Ascending aorta (tissue), 2 donors: ENCODE measurements at regions of chr12 and their contacts with region 1.

Region 1: GRCh38 chr12:68686595-68687521 is at the start of gene NUP107:
- DNase-seq: peak; percentile 93 to 99
- H3K4me3 ChIP-seq: peak within 1 kb of the TSS; percentile 69 to 85
- H3K27ac ChIP-seq: peak within 1 kb of the TSS; percentile 66 to 69
- H3K4me1 ChIP-seq: peaks cover 5 to 7% of the 10 kb centered on the region in 2 donors
- H3K27me3 ChIP-seq: no peaks in the 10 kb centered on the region
- CTCF ChIP-seq: no peak
- total RNA-seq, gene NUP107: 4.7 TPM

Region 2: GRCh38 chr12:68331869-68332727 is 354.8 kb before region 1 on chr12 and contains the start of gene MDM1:
- intact Hi-C with region 1: loop called (anchors 1 kb)
- DNase-seq: peak; percentile 94 to 99
- H3K4me3 ChIP-seq: peak within 1 kb of the TSS; percentile 77 to 88
- H3K27ac ChIP-seq: peak within 1 kb of the TSS; percentile 58 to 66
- H3K4me1 ChIP-seq: peaks cover 0 to 8% of the 10 kb centered on the region in 2 donors
- H3K27me3 ChIP-seq: no peaks in the 10 kb centered on the region
- CTCF ChIP-seq: no peak
- total RNA-seq, gene MDM1: 9.5 TPM

Region 3: GRCh38 chr12:68358532-68359485 is 328.0 kb before region 1 on chr12:
- intact Hi-C with region 1: loop called (anchors 1 kb)
- DNase-seq: peak in 1 of 2 donors; percentile 80
- H3K4me3 ChIP-seq: no peak overlapping the region
- H3K27ac ChIP-seq: no peak overlapping the region
- H3K4me1 ChIP-seq: no peaks in the 10 kb centered on the region
- H3K27me3 ChIP-seq: no peaks in the 10 kb centered on the region
- CTCF ChIP-seq: peak; percentile 63 to 66 (median 64)

Region 4: DNA sequence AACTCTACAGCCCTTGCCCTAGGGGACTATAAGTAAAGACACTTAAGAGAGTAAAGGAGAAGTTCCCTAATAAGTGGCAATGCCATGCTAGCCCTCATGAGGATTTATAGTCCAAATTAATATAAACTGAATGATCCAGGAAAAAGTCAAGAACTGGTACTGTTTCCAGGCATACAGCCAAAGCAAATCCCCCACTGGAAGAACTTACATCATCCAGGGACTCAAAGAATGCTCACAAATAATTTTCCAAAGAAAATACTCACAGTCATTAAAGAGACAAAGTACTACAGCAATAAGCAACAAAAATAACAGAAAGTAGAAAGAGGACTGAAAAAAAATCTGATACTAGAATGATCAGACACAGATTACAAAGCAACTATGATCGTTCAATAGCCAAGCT is 155.9 kb before region 1 on chr12:
- intact Hi-C with region 1: loop called (anchors 2 kb)
- DNase-seq: peak in 1 of 2 donors; percentile 74
- H3K4me3 ChIP-seq: peak overlapping the region in 1 of 2 donors; percentile 2
- H3K27ac ChIP-seq: peak overlapping the region; percentile 22 to 68
- H3K4me1 ChIP-seq: peaks cover 6 to 28% of the 10 kb centered on the region in 2 donors
- H3K27me3 ChIP-seq: no peaks in the 10 kb centered on the region
- CTCF ChIP-seq: no peak

Region 5: GRCh38 chr12:68745904-68746571 is 59.2 kb after region 1 on chr12 and contains the start of gene SLC35E3:
- intact Hi-C with region 1: loop called (anchors 1 kb)
- DNase-seq: peak; percentile 68 to 94
- H3K4me3 ChIP-seq: peak within 1 kb of the TSS; percentile 66 to 85
- H3K27ac ChIP-seq: peak within 1 kb of the TSS; percentile 72 to 75
- H3K4me1 ChIP-seq: peaks cover 0 to 7% of the 10 kb centered on the region in 2 donors
- H3K27me3 ChIP-seq: no peaks in the 10 kb centered on the region
- CTCF ChIP-seq: no peak
- total RNA-seq, gene SLC35E3: 2.0 TPM

Region 6: GRCh38 chr12:68772714-68773113 is 85.9 kb after region 1 on chr12:
- intact Hi-C with region 1: no loop called
- DNase-seq: no peak
- H3K4me3 ChIP-seq: no peak overlapping the region
- H3K27ac ChIP-seq: no peak overlapping the region
- H3K4me1 ChIP-seq: no peaks in the 10 kb centered on the region
- H3K27me3 ChIP-seq: no peaks in the 10 kb centered on the region
- CTCF ChIP-seq: no peak

Region 7: GRCh38 chr12:68807576-68808387 is 120.9 kb after region 1 on chr12 and contains the start of gene MDM2:
- intact Hi-C with region 1: loop called (anchors 5 kb)
- DNase-seq: peak; percentile 85 to 97
- H3K4me3 ChIP-seq: peak within 1 kb of the TSS; percentile 81 to 93
- H3K27ac ChIP-seq: peak within 1 kb of the TSS; percentile 98 to 99
- H3K4me1 ChIP-seq: peaks cover 0 to 14% of the 10 kb centered on the region in 2 donors
- H3K27me3 ChIP-seq: no peaks in the 10 kb centered on the region
- CTCF ChIP-seq: peak; percentile 80 to 85 (median 82)
- total RNA-seq, gene MDM2: 24.2 TPM